ENCODE measurements at regions of chr18 and their contacts with region 1.

Region 1: DNA sequence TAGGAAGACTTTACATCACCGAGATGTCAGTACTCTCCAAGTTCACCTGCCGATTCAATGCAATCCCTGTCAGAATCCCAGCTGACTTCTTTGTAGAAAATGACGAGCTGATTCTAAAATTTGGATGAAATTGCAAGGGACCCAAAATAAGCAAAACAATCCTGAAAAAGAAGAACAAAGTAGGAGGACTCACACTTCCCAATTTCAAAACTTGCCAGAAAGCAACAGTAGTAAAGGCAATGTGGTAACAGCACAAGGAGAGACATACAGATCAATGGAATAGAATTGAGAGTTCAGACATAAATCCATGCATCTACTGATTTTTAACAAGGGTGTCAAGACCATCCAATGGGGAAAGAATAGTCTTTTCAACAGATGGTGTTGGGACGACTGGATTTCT is 52.2 kb downstream of the SMAD7 start:
- DNase-seq: no peak
- ATAC-seq: no peak

Region 2: DNA sequence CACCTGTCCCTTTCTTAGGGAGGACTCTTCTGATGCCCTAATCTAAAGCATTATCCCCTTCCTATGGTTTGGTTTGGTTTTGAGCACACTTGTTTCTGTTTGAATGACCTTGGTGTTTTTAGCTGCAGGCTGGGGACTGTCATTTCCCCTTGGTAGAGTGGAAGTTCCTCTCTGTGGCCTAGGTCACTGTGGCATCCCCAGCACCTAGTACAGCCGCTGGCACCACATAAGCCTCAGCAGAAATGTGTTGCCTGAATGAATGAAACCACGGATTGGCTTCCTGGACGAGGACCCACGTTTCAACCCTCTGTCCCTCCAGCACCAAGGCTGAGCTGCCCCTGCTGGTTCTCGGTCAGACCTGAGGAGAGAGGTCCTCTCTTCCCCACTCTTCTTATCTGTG is 199.8 kb before region 1 on chr18:
- intact Hi-C with region 1: no loop called
- DNase-seq: no peak
- ATAC-seq: no peak

Region 3: DNA sequence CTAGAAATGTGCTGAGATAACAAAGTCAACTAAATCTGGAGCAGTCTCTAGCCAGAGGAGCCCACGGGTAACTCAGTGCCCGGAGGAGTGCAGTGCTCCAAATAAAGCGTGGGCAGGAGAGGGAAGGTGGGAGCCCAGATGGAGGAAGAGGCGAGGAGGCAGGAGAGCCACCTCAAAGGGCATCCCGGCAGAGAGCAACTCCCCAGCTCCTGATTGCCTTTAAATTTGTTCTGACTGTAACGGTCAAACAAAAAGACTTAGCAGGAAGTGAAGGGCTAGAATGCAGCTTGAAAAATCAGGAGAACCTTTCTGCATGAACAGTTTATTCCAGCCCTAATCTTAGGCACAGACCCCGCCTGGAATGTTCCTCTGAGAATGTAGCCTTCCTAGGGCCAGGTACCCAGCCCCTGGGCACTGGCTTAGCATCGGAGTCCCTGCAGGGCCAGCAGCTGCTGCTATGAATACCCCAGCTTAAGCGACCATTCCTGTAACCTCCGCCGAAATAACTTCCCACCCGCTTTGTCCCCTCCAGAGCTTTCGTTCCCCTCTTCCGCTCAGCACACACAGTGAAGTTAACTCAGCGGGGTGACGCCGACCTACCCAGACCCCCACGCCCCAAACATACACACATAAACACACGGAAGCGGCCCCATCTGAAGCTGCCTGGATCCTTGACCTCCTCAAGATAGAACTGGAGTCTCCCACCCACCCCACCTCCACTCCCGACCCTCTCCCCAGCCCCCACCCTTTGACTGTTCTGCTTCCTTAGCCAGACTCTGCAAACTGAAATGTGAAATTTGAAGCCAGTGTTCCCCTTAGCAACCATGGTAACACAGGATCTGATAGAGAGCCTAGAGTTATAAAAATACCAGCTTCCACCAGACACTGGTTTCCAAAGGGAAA is 71.0 kb before region 1 on chr18:
- intact Hi-C with region 1: no loop called
- DNase-seq: peak; percentile 59
- ATAC-seq: peak; percentile 85

Region 4: GRCh38 chr18:48872234-48873145 is 26.0 kb before region 1 on chr18:
- intact Hi-C with region 1: loop called (anchors 2 kb)
- DNase-seq: no peak
- ATAC-seq: no peak

Region 5: GRCh38 chr18:48934723-48935432 is 36.4 kb after region 1 on chr18:
- intact Hi-C with region 1: no loop called
- DNase-seq: no peak
- ATAC-seq: peak; percentile 14

Measured in sciatic nerve (tissue), 2 donors.